ENCODE measurements at regions of chr20 and their contacts with region 1.

Region 1: GRCh38 chr20:49541733-49542513 is 26.0 kb downstream of the PTGIS start:
- DNase-seq: peak; percentile 80
- CTCF ChIP-seq: peak; percentile 90

Region 2: DNA sequence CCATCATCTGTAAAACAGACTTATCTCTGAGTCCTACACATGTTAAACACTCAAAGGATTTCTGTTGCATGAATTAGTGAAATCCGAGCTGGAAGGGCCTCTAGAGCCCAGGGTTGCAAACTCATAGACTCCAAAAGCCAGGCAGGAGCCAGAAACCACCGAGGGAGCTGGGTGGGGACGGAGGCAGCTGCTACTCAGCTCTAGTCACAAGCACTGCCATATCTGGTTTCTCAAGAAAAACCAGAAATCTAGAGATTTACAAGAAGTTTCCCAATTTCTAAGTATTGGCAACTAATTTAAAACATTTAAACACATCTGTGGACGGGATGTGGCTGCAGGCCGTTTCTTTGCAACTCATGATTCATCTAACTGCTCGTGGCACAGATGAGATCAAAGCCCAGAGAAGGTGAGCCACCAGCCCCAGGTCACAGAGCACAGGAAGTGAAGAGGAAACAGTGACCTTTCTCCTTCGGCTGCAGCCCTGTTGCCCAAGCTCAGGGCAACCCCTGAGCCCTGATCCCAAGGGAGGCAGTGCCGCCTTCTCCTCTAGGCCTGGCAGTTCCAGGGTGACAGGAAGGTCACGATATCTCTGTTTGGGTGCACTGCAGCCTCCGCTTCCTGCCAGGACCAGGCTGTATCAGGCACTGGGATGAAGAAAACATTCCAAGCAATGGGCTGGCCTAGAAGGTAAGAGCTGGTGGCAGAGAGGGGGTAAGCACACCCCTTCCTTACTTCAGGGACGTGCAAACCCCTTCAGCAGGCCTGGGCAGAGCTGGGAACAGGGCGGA is 52.4 kb after region 1 on chr20:
- in situ Hi-C with region 1: no loop called
- DNase-seq: no peak
- CTCF ChIP-seq: no peak

Region 3: GRCh38 chr20:49846206-49846807 is 304.4 kb after region 1 on chr20:
- in situ Hi-C with region 1: loop called (anchors 10 kb)
- DNase-seq: peak; percentile 68
- CTCF ChIP-seq: peak; percentile 50

Region 4: GRCh38 chr20:50379049-50379990 is 837.4 kb after region 1 on chr20:
- in situ Hi-C with region 1: no loop called
- DNase-seq: no peak
- CTCF ChIP-seq: no peak

Measured in GM13977 (cell line).